ENCODE measurements at regions of chr18 and their contacts with region 1.

Region 1: GRCh38 chr18:74342416-74343043 is 26.9 kb downstream of the C18orf63 start:
- DNase-seq: no peak
- ATAC-seq: no peak
- H3K4me3 Mint-ChIP-seq: no peak overlapping the region
- H3K27ac Mint-ChIP-seq: no peak overlapping the region
- H3K4me1 Mint-ChIP-seq: peaks cover 22% of the 10 kb centered on the region
- H3K27me3 Mint-ChIP-seq: no peaks in the 10 kb centered on the region
- CTCF ChIP-seq: peak; percentile 55

Region 2: GRCh38 chr18:73945130-73945792 is 397.3 kb before region 1 on chr18:
- CTCF ChIA-PET with region 1: no interaction called
- POLR2A ChIA-PET with region 1: no interaction called
- intact Hi-C with region 1: no loop called
- DNase-seq: no peak
- ATAC-seq: no peak
- H3K4me3 Mint-ChIP-seq: no peak overlapping the region
- H3K27ac Mint-ChIP-seq: no peak overlapping the region
- H3K4me1 Mint-ChIP-seq: peaks cover 8% of the 10 kb centered on the region
- H3K27me3 Mint-ChIP-seq: no peaks in the 10 kb centered on the region
- CTCF ChIP-seq: no peak

Region 3: DNA sequence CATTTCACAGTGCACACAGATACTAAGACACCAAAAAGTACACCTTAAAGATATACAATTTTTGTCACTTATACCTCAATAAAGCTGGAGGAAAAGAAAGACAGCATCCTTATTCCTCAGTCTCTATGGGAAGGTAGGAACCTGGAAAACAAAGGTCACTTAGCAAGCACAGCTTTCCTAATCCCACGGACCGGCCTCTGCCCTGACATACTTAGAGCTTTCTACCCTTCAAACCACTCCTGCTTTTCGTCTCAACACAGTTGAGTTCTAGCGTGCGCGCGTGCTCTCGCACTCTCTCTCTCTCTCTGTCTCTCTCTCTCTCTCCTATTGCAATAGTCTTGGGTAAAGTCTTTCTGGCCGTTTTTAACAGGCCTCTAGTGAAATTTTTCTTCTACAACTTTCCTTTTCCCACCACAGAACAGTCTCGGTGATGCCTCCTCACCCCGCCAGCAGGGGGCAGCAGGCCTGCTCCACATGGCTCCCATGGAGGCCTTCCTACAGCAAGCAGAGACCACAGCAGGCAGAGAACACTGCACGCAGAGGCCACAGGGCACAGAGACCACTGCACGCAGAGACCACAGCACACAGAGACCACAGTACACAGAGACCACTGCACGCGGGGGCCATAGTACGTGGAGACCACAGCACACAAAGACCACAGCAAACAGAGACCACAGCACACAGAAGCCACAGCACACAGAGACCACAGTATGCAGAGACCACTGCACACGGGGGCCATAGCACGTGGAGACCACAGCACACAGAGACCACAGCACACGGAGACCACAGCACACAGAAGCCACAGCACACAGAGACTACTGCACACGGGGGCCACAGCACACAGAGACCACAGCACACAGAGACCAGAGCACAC is 301.8 kb before region 1 on chr18:
- CTCF ChIA-PET with region 1: interaction called, 14 read pairs
- POLR2A ChIA-PET with region 1: no interaction called
- intact Hi-C with region 1: loop called (anchors 1 kb)
- DNase-seq: peak; percentile 49
- ATAC-seq: peak; percentile 69
- H3K4me3 Mint-ChIP-seq: no peak overlapping the region
- H3K27ac Mint-ChIP-seq: no peak overlapping the region
- H3K4me1 Mint-ChIP-seq: peaks cover 16% of the 10 kb centered on the region
- H3K27me3 Mint-ChIP-seq: no peaks in the 10 kb centered on the region
- CTCF ChIP-seq: no peak

Region 4: GRCh38 chr18:74147779-74148542 is 194.6 kb before region 1 on chr18 and contains the starts of genes FBXO15 and TIMM21:
- CTCF ChIA-PET with region 1: interaction called, 3 read pairs
- POLR2A ChIA-PET with region 1: no interaction called
- intact Hi-C with region 1: loop called (anchors 1 kb)
- DNase-seq: peak; percentile 96
- ATAC-seq: peak; percentile 85
- H3K4me3 Mint-ChIP-seq: peak within 1 kb of the TSS; percentile 97
- H3K27ac Mint-ChIP-seq: peak within 1 kb of the TSS; percentile 99
- H3K4me1 Mint-ChIP-seq: peaks cover 48% of the 10 kb centered on the region
- H3K27me3 Mint-ChIP-seq: peaks cover 1% of the 10 kb centered on the region
- CTCF ChIP-seq: no peak
- total RNA-seq, gene FBXO15: 0.69 and 0.98 TPM in 2 replicates
- total RNA-seq, gene TIMM21: 23.3 and 27.0 TPM in 2 replicates

Region 5: GRCh38 chr18:74264303-74265020 is 78.1 kb before region 1 on chr18:
- CTCF ChIA-PET with region 1: interaction called, 3 read pairs
- POLR2A ChIA-PET with region 1: no interaction called
- intact Hi-C with region 1: loop called (anchors 2 kb)
- DNase-seq: peak; percentile 30
- ATAC-seq: peak; percentile 99
- H3K4me3 Mint-ChIP-seq: peak overlapping the region; percentile 59
- H3K27ac Mint-ChIP-seq: peak overlapping the region; percentile 86
- H3K4me1 Mint-ChIP-seq: peaks cover 36% of the 10 kb centered on the region
- H3K27me3 Mint-ChIP-seq: no peaks in the 10 kb centered on the region
- CTCF ChIP-seq: no peak

Region 6: DNA sequence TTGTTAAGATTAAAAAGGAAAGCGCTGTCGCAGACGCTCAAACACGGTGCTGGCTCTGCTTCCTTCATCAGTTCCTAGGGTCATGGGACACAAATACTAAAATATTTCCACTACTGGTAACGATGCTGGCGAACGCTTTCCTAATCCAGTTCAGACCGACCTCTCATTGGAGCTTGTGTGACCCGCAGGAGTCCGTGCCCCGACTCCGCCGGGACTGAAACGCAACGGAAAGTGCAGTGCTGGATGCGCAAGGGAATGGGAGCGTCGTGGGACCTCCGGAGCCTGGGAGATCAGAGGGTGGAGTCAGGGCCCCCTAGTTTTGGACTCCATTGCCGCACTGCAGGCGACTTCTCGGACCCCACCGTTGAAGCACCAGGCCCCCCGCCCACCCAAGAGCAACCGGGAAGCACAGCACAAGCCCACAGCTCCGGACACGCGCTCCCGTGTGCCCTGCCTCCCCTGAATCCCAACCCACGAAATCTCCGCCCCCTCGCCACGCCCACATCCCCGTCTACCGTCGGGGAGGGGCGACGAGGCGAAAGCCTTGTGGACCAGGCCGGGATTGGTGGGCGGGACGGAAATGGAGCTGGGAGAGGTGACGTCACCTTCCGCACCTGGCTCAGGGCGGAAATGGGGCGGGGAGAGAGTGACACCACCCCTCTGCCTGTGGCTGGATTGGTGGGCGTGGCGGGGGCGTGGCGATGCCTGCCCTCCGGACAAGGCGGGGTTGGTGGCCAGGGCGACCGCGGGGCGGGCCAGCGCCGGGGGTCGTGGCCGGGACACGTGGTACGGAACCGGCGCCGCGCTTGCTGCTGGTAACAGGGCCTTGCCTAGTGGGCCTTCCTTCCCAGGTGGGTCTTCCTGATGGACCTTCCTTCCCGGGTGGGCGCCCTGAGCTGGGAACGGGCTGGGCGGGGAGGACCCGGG is 153.3 kb after region 1 on chr18 and contains the start of gene CNDP2:
- CTCF ChIA-PET with region 1: interaction called, 11 read pairs
- POLR2A ChIA-PET with region 1: no interaction called
- intact Hi-C with region 1: no loop called
- DNase-seq: peak; percentile 99
- ATAC-seq: peak; percentile 81
- H3K4me3 Mint-ChIP-seq: peak within 1 kb of the TSS; percentile 99
- H3K27ac Mint-ChIP-seq: peak within 1 kb of the TSS; percentile 98
- H3K4me1 Mint-ChIP-seq: peaks cover 46% of the 10 kb centered on the region
- H3K27me3 Mint-ChIP-seq: no peaks in the 10 kb centered on the region
- CTCF ChIP-seq: no peak
- total RNA-seq, gene CNDP2: 193 and 208 TPM in 2 replicates